CD4-positive, alpha-beta memory T cell (primary cell): ENCODE measurements at regions of chr3 and their contacts with region 1.

Region 1: GRCh38 chr3:46947981-46948791 is 28.4 kb downstream of the CCDC12 start:
- DNase-seq: peak; percentile 73 to 97 (median 83)
- H3K4me3 ChIP-seq: peak overlapping the region in 1 of 2 donors; percentile 13
- H3K4me3 Mint-ChIP-seq: peak overlapping the region; percentile 56 to 85 (median 78)
- H3K27ac ChIP-seq: peak overlapping the region; percentile 69
- H3K27ac Mint-ChIP-seq: peak overlapping the region; percentile 95 to 99 (median 97)
- H3K4me1 ChIP-seq: peaks cover 88% of the 10 kb centered on the region
- H3K4me1 Mint-ChIP-seq: peaks cover 70 to 94% (median 80%) of the 10 kb centered on the region in 4 donors
- H3K27me3 ChIP-seq: no peaks in the 10 kb centered on the region
- H3K27me3 Mint-ChIP-seq: no peaks in the 10 kb centered on the region

Region 2: DNA sequence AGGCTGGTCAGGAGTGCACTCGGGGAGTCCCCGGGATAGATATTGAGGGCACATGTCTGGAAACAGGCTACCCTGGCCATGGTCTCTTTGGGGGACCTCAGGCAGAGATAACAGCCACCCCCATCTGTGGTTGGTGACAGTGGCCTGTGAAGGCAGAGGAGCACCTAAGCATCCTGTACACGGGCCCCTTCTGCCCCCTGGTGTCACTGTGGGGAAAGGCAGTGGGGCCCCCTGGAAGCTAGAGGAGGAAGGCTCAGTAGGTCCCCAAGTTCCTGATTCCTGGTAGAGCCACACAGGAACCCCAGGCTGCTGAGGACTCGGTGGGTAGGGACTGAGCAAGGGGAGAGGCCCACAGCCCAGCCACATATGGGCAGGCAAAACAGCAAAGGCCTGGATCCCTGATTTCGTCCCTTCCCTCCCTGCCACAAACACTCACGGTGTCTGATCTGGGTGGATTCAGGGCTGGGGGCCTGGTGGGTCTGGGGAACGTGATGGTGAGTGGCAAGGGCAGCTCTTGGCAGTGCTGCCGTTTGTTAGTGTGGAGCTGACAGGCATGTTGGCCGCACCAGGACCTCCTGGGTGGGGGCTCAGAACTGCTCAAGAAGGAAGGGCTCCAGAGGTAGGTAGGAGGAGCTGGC is 1019.0 kb before region 1 on chr3:
- CTCF ChIA-PET with region 1: no interaction called
- POLR2A ChIA-PET with region 1: no interaction called
- intact Hi-C with region 1: no loop called
- DNase-seq: peak; percentile 55 to 64 (median 56)
- H3K4me3 ChIP-seq: no peak overlapping the region
- H3K4me3 Mint-ChIP-seq: no peak overlapping the region
- H3K27ac ChIP-seq: no peak overlapping the region
- H3K27ac Mint-ChIP-seq: peak overlapping the region in 3 of 7 donors; percentile 22 to 68 (median 53)
- H3K4me1 ChIP-seq: no peaks in the 10 kb centered on the region
- H3K4me1 Mint-ChIP-seq: peaks cover 5 to 23% (median 9%) of the 10 kb centered on the region in 4 donors
- H3K27me3 ChIP-seq: no peaks in the 10 kb centered on the region
- H3K27me3 Mint-ChIP-seq: no peaks in the 10 kb centered on the region

Region 3: GRCh38 chr3:46923559-46924350 is 24.4 kb before region 1 on chr3:
- CTCF ChIA-PET with region 1: interaction called, 8 read pairs
- POLR2A ChIA-PET with region 1: interaction called, 13 read pairs
- intact Hi-C with region 1: no loop called
- DNase-seq: peak in 4 of 5 donors; percentile 31 to 48 (median 37)
- H3K4me3 ChIP-seq: no peak overlapping the region
- H3K4me3 Mint-ChIP-seq: no peak overlapping the region
- H3K27ac ChIP-seq: no peak overlapping the region
- H3K27ac Mint-ChIP-seq: peak overlapping the region in 6 of 7 donors; percentile 37 to 91 (median 79)
- H3K4me1 ChIP-seq: peaks cover 31% of the 10 kb centered on the region
- H3K4me1 Mint-ChIP-seq: peaks cover 22 to 45% (median 28%) of the 10 kb centered on the region in 4 donors
- H3K27me3 ChIP-seq: no peaks in the 10 kb centered on the region
- H3K27me3 Mint-ChIP-seq: no peaks in the 10 kb centered on the region

Region 4: DNA sequence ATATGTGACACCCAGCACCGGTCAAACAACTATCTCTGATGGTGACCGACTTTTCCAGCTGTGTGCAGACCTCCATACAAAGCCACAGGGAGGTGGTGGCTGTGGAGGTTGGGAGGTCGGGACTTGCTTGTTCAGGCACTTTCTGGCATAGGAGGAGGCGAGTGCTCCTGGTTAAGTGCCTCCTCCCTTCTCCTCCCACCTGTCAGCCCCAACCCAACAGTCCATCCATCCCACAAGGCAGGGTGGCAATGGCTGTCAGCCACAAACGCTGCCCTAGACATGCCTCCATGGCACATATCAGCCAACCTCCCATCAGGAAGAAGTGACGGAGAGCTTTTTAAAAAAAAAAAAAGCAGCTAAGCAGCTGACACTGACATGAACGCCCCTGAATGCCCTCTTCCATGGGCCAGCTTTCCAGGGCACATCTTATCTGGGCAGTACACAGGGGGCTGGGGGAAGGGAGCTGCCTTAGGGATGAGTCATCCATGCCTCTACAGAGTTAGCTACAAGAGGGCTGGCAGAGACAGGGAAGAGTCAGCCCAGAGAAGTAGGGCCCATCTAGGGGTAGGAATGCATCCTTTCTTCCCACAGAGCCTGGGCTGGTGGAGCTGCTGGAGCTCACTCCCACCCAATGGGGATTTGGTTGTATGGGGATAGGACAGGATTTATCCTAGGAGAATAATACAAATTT is 12.9 kb before region 1 on chr3:
- CTCF ChIA-PET with region 1: interaction called, 7 read pairs
- POLR2A ChIA-PET with region 1: interaction called, 17 read pairs
- intact Hi-C with region 1: no loop called
- DNase-seq: no peak
- H3K4me3 ChIP-seq: no peak overlapping the region
- H3K4me3 Mint-ChIP-seq: no peak overlapping the region
- H3K27ac ChIP-seq: no peak overlapping the region
- H3K27ac Mint-ChIP-seq: peak overlapping the region in 4 of 7 donors; percentile 25 to 59 (median 45)
- H3K4me1 ChIP-seq: peaks cover 40% of the 10 kb centered on the region
- H3K4me1 Mint-ChIP-seq: peaks cover 39 to 68% (median 47%) of the 10 kb centered on the region in 4 donors
- H3K27me3 ChIP-seq: no peaks in the 10 kb centered on the region
- H3K27me3 Mint-ChIP-seq: no peaks in the 10 kb centered on the region

Region 5: DNA sequence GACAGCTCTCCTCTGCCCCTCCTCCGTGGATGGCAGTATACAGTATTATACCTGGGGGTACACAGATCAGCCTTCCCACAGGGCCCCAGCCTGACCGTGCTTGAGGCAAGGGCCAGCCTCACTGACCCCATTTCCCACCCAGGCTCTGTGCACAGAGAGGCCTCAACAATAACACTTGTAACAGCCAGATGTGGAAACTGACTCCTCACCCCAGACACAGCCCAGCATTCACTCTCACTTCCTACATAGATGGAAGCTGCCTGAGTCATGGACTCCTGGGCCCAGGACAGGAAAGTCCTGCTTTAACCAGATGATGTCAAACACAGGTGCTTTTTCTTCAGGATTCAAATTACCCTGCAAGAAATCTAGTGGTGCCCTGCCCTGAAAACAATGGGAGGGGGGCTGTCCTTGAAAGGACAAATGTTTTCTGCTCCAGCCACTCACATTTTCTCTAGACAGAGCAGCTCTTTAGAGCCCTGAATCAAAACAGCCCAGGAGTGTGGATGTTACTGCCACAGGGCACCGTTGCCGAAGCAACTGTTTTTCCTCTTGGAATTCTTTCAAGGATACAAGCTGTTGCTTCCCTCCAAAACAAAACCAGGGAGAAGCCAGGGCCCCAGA is 12.0 kb after region 1 on chr3:
- CTCF ChIA-PET with region 1: interaction called, 8 read pairs
- POLR2A ChIA-PET with region 1: interaction called, 19 read pairs
- intact Hi-C with region 1: no loop called
- DNase-seq: no peak
- H3K4me3 ChIP-seq: no peak overlapping the region
- H3K4me3 Mint-ChIP-seq: peak overlapping the region in 7 of 8 donors; percentile 29 to 79 (median 57)
- H3K27ac ChIP-seq: peak overlapping the region; percentile 24
- H3K27ac Mint-ChIP-seq: peak overlapping the region in 6 of 7 donors; percentile 7 to 92 (median 85)
- H3K4me1 ChIP-seq: peaks cover 74% of the 10 kb centered on the region
- H3K4me1 Mint-ChIP-seq: peaks cover 61 to 81% (median 70%) of the 10 kb centered on the region in 4 donors
- H3K27me3 ChIP-seq: no peaks in the 10 kb centered on the region
- H3K27me3 Mint-ChIP-seq: no peaks in the 10 kb centered on the region

Region 6: GRCh38 chr3:46987743-46988401 is 39.7 kb after region 1 on chr3:
- CTCF ChIA-PET with region 1: no interaction called
- POLR2A ChIA-PET with region 1: interaction called, 34 read pairs
- intact Hi-C with region 1: loop called (anchors 2 kb)
- DNase-seq: peak; percentile 91 to 94 (median 94)
- H3K4me3 ChIP-seq: peak overlapping the region; percentile 57 to 66
- H3K4me3 Mint-ChIP-seq: peak overlapping the region; percentile 83 to 91 (median 86)
- H3K27ac ChIP-seq: peak overlapping the region; percentile 76
- H3K27ac Mint-ChIP-seq: peak overlapping the region; percentile 86 to 98 (median 96)
- H3K4me1 ChIP-seq: peaks cover 86% of the 10 kb centered on the region
- H3K4me1 Mint-ChIP-seq: peaks cover 53 to 90% (median 76%) of the 10 kb centered on the region in 4 donors
- H3K27me3 ChIP-seq: no peaks in the 10 kb centered on the region
- H3K27me3 Mint-ChIP-seq: no peaks in the 10 kb centered on the region

Region 7: DNA sequence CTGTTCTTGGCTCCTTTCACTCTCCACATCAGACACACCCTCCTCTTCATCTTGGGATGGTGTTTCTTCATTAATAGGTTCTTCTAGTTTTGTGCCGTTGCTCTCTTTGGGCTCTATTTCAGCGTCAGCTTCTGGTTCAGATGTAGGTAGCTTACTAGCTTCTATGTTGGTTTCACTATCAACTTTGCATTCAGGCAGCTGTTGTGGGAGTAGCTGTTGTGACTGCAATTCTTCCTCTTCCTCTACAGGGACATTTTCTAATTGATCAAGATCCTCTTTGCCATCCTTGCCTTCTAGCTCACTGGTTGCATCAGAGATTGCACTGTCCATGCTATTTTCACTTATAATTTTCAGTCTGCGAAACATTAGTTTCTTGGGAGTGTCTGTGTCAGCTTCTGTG is 135.6 kb after region 1 on chr3:
- CTCF ChIA-PET with region 1: no interaction called
- POLR2A ChIA-PET with region 1: no interaction called
- intact Hi-C with region 1: no loop called
- DNase-seq: peak in 1 of 5 donors; percentile 5
- H3K4me3 ChIP-seq: no peak overlapping the region
- H3K4me3 Mint-ChIP-seq: peak overlapping the region in 2 of 8 donors; percentile 9 to 36
- H3K27ac ChIP-seq: no peak overlapping the region
- H3K27ac Mint-ChIP-seq: peak overlapping the region in 5 of 7 donors; percentile 30 to 76 (median 60)
- H3K4me1 ChIP-seq: no peaks in the 10 kb centered on the region
- H3K4me1 Mint-ChIP-seq: peaks cover 10 to 17% (median 14%) of the 10 kb centered on the region in 4 donors
- H3K27me3 ChIP-seq: no peaks in the 10 kb centered on the region
- H3K27me3 Mint-ChIP-seq: no peaks in the 10 kb centered on the region